Activated B cell treated with CpG ODN at 0.5 μM for 24 hours (primary cell): ENCODE measurements at regions of chr9 and their contacts with region 1.

Region 1: DNA sequence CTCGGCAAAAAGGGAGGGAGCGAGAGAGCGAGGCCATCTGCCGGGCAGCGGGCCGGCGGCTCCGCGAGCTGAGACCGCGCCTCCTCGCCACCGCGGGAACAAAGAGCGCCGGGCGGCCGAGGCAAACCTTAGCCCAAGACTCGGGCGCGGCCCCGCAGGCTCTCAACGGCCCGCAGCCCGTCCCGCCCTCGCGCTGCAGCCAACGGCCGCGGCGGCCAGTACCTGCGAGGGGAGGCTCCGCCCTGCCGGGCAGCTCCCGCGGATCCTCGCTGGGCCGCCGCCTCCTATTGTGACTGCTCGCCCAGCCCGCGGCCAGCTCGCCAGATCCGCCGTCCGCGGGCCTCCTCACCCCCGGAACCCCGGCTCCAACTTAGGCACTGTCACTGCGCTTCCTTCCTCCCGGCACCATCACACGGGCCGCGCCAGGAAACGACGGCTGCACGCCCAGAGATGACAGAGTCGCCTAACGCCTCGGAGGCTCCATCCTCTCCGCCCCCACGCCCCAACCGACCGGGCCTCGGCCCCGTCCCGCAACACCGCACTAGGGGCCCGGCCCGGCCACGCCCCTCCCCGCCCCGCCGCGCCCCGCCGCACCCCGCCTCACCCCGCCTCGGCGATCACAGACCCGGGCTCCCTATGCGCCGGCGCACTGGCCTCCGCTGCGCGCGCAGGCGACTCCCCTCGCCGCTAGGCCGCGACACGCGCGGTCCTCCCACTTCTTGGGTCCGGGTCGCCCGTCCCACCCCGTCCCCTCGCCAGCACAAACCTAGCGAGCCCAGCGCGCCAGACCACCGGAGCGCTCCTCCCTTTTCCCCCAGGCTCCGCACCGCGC is 479 bp upstream of the RNF38 start:
- DNase-seq: peak; percentile 92
- ATAC-seq: peak; percentile 78
- H3K4me3 Mint-ChIP-seq: peak overlapping the region; percentile 89
- H3K27ac Mint-ChIP-seq: peak overlapping the region; percentile 93
- H3K4me1 Mint-ChIP-seq: peaks cover 38% of the 10 kb centered on the region
- H3K27me3 Mint-ChIP-seq: no peaks in the 10 kb centered on the region
- CTCF ChIP-seq: no peak

Region 2: DNA sequence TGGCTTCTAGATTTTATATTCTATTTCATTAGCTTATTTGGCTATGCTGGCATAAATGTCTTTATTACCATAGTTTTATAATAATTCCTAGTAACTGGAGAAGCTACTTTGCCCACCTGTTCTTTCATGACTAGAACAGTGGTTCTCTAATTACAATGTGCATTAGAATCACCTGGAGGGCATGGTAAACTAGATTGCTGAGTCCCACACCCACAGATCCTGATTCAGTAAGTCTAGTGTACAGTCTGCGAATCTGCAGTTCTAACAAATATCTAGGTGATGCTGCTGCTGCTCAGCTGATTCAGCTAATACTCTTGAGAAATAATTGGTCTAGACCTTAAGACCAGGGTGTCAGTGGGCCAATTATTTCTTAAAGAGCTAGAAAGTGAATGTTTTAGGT is 36.0 kb before region 1 on chr9:
- CTCF ChIA-PET with region 1: no interaction called
- POLR2A ChIA-PET with region 1: no interaction called
- intact Hi-C with region 1: no loop called
- DNase-seq: no peak
- ATAC-seq: no peak
- H3K4me3 Mint-ChIP-seq: no peak overlapping the region
- H3K27ac Mint-ChIP-seq: no peak overlapping the region
- H3K4me1 Mint-ChIP-seq: no peaks in the 10 kb centered on the region
- H3K27me3 Mint-ChIP-seq: no peaks in the 10 kb centered on the region
- CTCF ChIP-seq: no peak

Region 3: DNA sequence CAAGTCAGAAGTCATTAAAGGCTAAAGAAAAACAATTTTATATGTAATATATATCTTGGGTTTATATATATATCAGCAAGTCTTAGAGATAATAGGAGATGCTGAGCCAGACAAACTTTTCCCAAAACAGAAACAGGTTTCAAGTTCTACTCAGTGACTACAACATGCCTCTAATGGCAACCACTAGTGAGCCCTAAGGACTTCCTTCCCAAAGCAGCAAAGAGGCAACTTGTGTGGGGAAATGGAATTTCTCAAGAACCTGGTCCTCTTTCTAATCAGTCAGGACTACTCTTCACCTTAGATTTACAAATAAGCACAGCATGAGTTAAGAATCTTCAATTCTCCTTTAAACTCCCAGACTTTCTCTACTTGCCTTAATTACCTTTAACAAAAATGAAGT is 18.1 kb before region 1 on chr9:
- CTCF ChIA-PET with region 1: interaction called, 3 read pairs
- POLR2A ChIA-PET with region 1: interaction called, 3 read pairs
- intact Hi-C with region 1: loop called (anchors 1 kb)
- DNase-seq: no peak
- ATAC-seq: no peak
- H3K4me3 Mint-ChIP-seq: peak overlapping the region; percentile 7
- H3K27ac Mint-ChIP-seq: peak overlapping the region; percentile 71
- H3K4me1 Mint-ChIP-seq: peaks cover 61% of the 10 kb centered on the region
- H3K27me3 Mint-ChIP-seq: no peaks in the 10 kb centered on the region
- CTCF ChIP-seq: no peak

Region 4: DNA sequence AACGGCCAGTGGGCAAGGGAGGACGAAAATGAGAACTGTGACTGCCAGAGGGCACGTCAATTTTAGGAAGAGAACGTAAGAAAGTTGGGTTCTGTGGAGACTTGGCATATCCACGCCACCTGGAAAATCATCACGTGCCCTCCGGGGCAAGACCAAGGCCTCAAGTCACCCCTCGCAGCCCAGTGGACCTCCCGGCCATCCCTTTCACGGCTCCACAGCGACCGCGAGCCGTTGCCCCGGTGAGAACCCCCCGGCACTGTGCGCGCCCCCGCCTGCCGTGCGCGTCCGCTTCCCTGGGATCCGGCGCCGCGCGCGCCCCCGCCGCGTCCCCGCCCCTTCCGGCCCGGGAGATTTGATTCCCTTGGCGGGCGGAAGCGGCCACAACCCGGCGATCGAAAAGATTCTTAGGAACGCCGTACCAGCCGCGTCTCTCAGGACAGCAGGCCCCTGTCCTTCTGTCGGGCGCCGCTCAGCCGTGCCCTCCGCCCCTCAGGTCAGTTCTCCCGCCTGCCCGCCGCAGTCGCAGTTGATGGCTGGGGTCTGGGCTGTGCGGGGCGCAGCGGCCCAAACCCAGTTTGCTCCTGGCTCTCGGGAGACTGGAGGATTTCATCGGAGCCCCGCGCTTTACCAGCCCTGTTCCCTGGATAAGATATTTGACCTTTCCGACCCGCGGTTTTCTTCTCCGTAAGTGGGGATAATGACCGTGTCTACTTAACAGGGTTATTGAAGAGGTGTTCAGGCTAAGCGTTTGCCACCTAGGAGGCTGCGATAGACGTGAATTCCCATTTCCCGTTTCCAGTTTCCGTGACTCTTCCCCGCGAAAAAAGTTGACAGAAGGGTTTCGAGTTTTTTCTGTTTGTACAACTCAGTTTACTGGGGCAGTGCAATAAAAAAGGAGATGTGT is 172.2 kb after region 1 on chr9 and contains the start of gene MELK:
- CTCF ChIA-PET with region 1: no interaction called
- POLR2A ChIA-PET with region 1: interaction called, 3 read pairs
- intact Hi-C with region 1: loop called (anchors 1 kb)
- DNase-seq: peak; percentile 91
- ATAC-seq: peak; percentile 89
- H3K4me3 Mint-ChIP-seq: peak within 1 kb of the TSS; percentile 88
- H3K27ac Mint-ChIP-seq: peak within 1 kb of the TSS; percentile 73
- H3K4me1 Mint-ChIP-seq: peaks cover 12% of the 10 kb centered on the region
- H3K27me3 Mint-ChIP-seq: no peaks in the 10 kb centered on the region
- CTCF ChIP-seq: no peak
- total RNA-seq, gene MELK: 0.76 and 1.2 TPM in 2 replicates

Region 5: GRCh38 chr9:36721846-36722572 is 321.5 kb after region 1 on chr9:
- CTCF ChIA-PET with region 1: no interaction called
- POLR2A ChIA-PET with region 1: no interaction called
- intact Hi-C with region 1: no loop called
- DNase-seq: no peak
- ATAC-seq: no peak
- H3K4me3 Mint-ChIP-seq: no peak overlapping the region
- H3K27ac Mint-ChIP-seq: no peak overlapping the region
- H3K4me1 Mint-ChIP-seq: peaks cover 4% of the 10 kb centered on the region
- H3K27me3 Mint-ChIP-seq: no peaks in the 10 kb centered on the region
- CTCF ChIP-seq: no peak

Region 6: DNA sequence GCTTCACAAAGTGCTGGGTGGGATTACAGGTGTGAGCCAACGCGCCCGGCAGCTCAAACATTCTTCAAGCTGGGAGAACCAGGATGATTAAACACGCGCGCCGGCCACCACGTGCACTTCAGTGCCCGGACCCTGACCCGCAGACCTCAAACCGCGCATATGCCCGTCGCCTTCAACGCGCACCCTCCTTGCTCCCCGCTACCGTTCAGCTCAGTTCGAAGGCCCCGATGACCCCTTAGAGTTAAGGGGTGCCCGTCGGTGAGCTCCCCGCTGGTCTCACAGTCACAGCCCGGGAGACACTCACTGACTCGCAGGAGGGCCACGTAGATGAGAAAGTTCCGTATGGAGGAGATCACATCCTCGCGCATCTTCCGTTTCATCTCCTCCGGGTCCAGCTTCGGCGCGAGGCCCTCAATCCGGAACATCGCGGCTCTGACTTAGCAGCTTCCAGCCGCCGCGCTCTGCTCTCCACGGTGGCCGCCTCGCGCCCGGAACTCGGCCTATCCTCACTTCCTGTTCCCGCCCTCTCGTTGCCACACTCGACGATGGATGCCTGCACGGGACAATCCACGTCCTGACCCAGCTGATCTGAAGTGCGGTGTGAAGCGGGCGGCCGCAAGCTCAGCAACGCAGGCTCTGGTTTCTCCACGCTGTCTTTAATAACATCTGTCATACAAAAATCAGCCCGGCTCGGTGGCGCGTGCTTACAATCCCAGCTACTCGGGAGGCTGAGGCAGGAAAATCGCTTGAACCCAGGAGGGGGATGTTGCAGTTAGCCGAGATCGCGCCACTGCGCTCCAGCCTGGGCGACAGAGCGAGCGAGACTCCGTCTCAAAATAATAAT is 1191.8 kb after region 1 on chr9 and contains the start of gene TOMM5:
- CTCF ChIA-PET with region 1: no interaction called
- POLR2A ChIA-PET with region 1: no interaction called
- intact Hi-C with region 1: loop called (anchors 10 kb)
- DNase-seq: peak; percentile 82
- ATAC-seq: peak; percentile 94
- H3K4me3 Mint-ChIP-seq: peak within 1 kb of the TSS; percentile 99
- H3K27ac Mint-ChIP-seq: peak within 1 kb of the TSS; percentile 96
- H3K4me1 Mint-ChIP-seq: peaks cover 47% of the 10 kb centered on the region
- H3K27me3 Mint-ChIP-seq: peaks cover 5% of the 10 kb centered on the region
- CTCF ChIP-seq: no peak
- total RNA-seq, gene TOMM5: 77.8 and 80.3 TPM in 2 replicates